Activated B cell treated with CpG ODN at 0.5 μM for 24 hours (primary cell): ENCODE measurements at regions of chr1 and their contacts with region 1.

Region 1: GRCh38 chr1:221741711-221742554 is at the start of gene DUSP10:
- DNase-seq: peak; percentile 94
- ATAC-seq: peak; percentile 81
- H3K4me3 Mint-ChIP-seq: no peak within 1 kb of the TSS
- H3K27ac Mint-ChIP-seq: peak within 1 kb of the TSS; percentile 65
- H3K4me1 Mint-ChIP-seq: peaks cover 20% of the 10 kb centered on the region
- H3K27me3 Mint-ChIP-seq: no peaks in the 10 kb centered on the region
- CTCF ChIP-seq: no peak
- total RNA-seq, gene DUSP10: 36.6 and 39.5 TPM in 2 replicates

Region 2: DNA sequence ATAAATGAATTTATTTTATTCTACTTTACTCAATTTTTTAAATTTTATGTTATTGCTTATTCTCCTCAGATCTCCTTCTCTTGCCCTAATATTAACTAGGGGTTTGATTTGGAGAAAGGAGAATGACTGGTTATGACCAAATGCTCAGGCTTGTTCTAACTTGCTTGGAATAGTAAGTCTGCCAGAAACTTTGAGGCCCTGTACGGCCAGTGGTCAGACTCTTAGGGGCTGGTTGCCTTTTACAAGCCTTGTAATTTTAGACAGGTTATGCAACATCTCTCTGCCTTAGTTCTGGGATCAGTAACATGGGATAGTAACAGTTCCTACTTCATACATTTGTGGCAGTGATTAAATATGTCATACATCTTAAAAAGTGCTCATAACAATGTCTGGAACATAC is 279.6 kb before region 1 on chr1:
- CTCF ChIA-PET with region 1: no interaction called
- POLR2A ChIA-PET with region 1: no interaction called
- intact Hi-C with region 1: no loop called
- DNase-seq: no peak
- ATAC-seq: no peak
- H3K4me3 Mint-ChIP-seq: no peak overlapping the region
- H3K27ac Mint-ChIP-seq: no peak overlapping the region
- H3K4me1 Mint-ChIP-seq: no peaks in the 10 kb centered on the region
- H3K27me3 Mint-ChIP-seq: peaks cover 8% of the 10 kb centered on the region
- CTCF ChIP-seq: no peak

Region 3: GRCh38 chr1:221543529-221544120 is 198.3 kb before region 1 on chr1:
- CTCF ChIA-PET with region 1: no interaction called
- POLR2A ChIA-PET with region 1: no interaction called
- intact Hi-C with region 1: loop called (anchors 2 kb)
- DNase-seq: no peak
- ATAC-seq: no peak
- H3K4me3 Mint-ChIP-seq: no peak overlapping the region
- H3K27ac Mint-ChIP-seq: no peak overlapping the region
- H3K4me1 Mint-ChIP-seq: no peaks in the 10 kb centered on the region
- H3K27me3 Mint-ChIP-seq: peaks cover under 1% of the 10 kb centered on the region
- CTCF ChIP-seq: no peak

Region 4: DNA sequence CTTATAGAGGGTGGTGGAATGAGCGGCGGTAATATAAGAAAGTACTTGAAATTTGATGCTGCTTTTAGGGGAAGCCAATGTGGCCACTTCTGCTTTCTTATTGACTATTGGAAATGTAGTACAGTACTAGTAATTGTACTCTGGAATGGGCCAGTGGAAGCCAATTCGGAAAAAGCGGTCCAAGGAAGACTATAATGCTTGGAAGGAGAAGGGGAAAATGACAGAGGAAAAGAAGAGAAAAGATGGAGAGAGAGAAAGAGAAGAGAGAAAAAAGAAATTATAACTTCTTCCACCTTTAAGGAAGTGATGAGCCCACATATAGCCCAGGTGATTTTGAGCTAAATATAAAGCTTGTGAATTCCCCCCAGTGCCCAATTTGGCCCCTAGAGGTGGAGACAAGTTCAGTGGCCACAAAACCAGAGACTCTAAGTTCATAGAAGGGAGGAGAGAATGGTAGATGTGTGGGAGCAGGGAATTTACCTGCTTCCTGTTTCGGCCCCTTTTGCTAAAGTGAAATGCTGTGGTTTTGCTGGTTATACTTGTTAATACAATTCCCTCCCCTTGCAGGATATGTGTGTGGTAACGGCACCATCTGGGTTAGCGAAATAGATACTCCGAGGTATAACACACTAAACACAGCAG is 35.6 kb after region 1 on chr1:
- CTCF ChIA-PET with region 1: interaction called, 24 read pairs
- POLR2A ChIA-PET with region 1: interaction called, 229 read pairs
- intact Hi-C with region 1: loop called (anchors 1 kb)
- DNase-seq: no peak
- ATAC-seq: peak; percentile 65
- H3K4me3 Mint-ChIP-seq: peak overlapping the region; percentile 75
- H3K27ac Mint-ChIP-seq: peak overlapping the region; percentile 95
- H3K4me1 Mint-ChIP-seq: peaks cover 78% of the 10 kb centered on the region
- H3K27me3 Mint-ChIP-seq: no peaks in the 10 kb centered on the region
- CTCF ChIP-seq: peak; percentile 34

Region 5: GRCh38 chr1:221829327-221830015 is 87.5 kb after region 1 on chr1:
- CTCF ChIA-PET with region 1: interaction called, 5 read pairs
- POLR2A ChIA-PET with region 1: interaction called, 13 read pairs
- intact Hi-C with region 1: no loop called
- DNase-seq: no peak
- ATAC-seq: peak; percentile 64
- H3K4me3 Mint-ChIP-seq: peak overlapping the region; percentile 66
- H3K27ac Mint-ChIP-seq: peak overlapping the region; percentile 90
- H3K4me1 Mint-ChIP-seq: peaks cover 58% of the 10 kb centered on the region
- H3K27me3 Mint-ChIP-seq: no peaks in the 10 kb centered on the region
- CTCF ChIP-seq: no peak

Region 6: GRCh38 chr1:222009105-222009730 is 267.3 kb after region 1 on chr1:
- CTCF ChIA-PET with region 1: interaction called, 9 read pairs
- POLR2A ChIA-PET with region 1: interaction called, 11 read pairs
- intact Hi-C with region 1: loop called (anchors 1 kb)
- DNase-seq: no peak
- ATAC-seq: peak; percentile 77
- H3K4me3 Mint-ChIP-seq: no peak overlapping the region
- H3K27ac Mint-ChIP-seq: no peak overlapping the region
- H3K4me1 Mint-ChIP-seq: peaks cover 2% of the 10 kb centered on the region
- H3K27me3 Mint-ChIP-seq: no peaks in the 10 kb centered on the region
- CTCF ChIP-seq: no peak

Region 7: GRCh38 chr1:222643938-222644635 is 902.2 kb after region 1 on chr1:
- CTCF ChIA-PET with region 1: no interaction called
- POLR2A ChIA-PET with region 1: interaction called, 4 read pairs
- intact Hi-C with region 1: loop called (anchors 5 kb)
- DNase-seq: peak; percentile 94
- ATAC-seq: peak; percentile 96
- H3K4me3 Mint-ChIP-seq: peak overlapping the region; percentile 100
- H3K27ac Mint-ChIP-seq: peak overlapping the region; percentile 99
- H3K4me1 Mint-ChIP-seq: peaks cover 25% of the 10 kb centered on the region
- H3K27me3 Mint-ChIP-seq: no peaks in the 10 kb centered on the region
- CTCF ChIP-seq: no peak